ENCODE measurements at regions of chr6 and their contacts with region 1.

Region 1: GRCh38 chr6:132483779-132484679 is 28.9 kb downstream of the STX7 start:
- DNase-seq: peak in 1 of 10 donors; percentile 29

Region 2: GRCh38 chr6:132279592-132280139 is 204.4 kb before region 1 on chr6:
- intact Hi-C with region 1: loop called (anchors 1 kb)
- DNase-seq: peak; percentile 60 to 97 (median 80)

Region 3: DNA sequence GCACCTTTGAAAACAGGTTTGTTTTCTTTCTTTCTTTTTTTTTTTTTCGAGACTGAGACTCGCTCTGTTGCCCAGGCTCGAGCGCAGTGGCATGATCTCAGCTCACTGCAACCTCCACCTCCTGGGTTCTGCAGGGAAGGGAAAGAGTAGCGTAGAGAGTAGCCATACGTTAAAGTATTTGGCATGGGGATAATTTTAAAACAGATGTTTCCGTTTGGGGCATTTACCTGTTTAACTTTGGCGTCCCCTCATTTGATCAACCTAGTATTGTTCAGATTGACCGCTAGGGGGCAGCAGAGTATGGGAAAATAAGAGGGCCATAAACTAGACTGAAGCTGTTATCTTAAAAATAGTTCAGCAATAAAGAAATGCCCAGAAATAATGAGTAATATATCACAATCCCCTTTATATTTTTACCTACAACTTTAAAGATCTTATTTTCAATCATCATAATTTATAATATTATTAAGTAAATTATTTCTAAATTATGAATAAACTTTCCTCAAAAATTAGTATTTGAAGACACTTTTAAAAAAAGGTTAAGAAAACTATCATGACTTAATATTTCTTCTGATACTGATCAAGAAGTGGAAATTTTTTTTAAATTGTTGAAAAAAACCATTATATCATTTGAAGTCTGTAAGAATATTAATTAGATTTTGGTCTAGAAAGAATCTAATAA is 46.4 kb after region 1 on chr6:
- intact Hi-C with region 1: no loop called
- DNase-seq: peak in 5 of 10 donors; percentile 11 to 72 (median 65)

Region 4: GRCh38 chr6:132587424-132587823 is 103.4 kb after region 1 on chr6:
- intact Hi-C with region 1: no loop called
- DNase-seq: no peak

Measured in posterior cingulate gyrus (tissue), 11 donors.